Natural killer cell (primary cell): ENCODE measurements at regions of chr7 and their contacts with region 1.

Region 1: DNA sequence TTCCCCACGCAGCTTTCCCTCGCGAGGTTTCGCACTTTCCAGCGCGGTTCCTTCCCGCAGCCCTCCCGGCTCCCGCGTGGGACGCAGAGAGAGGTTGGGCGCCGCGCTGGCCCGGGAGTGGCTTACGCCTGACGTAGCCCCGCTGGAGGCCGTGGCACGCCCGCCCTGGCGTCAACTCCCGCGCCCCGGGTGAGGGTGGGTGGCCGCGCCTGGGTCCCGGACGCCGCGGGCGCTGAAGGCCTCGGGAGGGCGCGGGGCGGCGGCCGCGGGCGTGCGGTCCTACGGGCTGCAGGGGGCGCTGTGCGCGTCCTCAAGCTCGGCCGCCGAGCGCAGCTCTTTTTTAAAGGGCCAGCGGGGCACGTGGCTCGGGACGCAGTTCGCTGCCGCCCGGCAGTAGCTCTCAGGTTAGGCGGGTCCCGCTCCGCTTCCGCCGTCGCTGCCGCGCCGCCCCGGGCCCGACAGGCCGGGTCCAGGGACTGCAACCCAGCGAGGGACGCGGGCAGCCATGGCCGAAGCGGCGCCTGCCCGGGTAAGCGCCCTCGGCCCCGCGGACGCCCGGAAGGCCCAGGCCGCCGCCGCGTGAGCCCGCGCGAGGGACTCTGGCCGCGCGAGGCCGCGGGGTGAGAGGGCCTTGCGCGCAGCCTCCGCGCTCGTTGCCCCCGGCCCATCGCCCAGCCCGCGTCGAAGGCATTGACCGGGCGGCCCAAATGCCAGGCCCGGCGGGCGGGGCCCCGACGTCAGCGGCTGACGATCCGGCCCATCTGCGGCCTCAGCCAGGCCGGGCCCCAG is at the start of gene ZNF783:
- DNase-seq: peak; percentile 82 to 96
- ATAC-seq: peak; percentile 86 to 95 (median 90)
- H3K4me3 ChIP-seq: peak within 1 kb of the TSS; percentile 57
- H3K4me3 Mint-ChIP-seq: peak within 1 kb of the TSS; percentile 91
- H3K27ac ChIP-seq: peak within 1 kb of the TSS; percentile 81
- H3K27ac Mint-ChIP-seq: peak within 1 kb of the TSS; percentile 86 to 88
- H3K4me1 ChIP-seq: peaks cover 16% of the 10 kb centered on the region
- H3K4me1 Mint-ChIP-seq: peaks cover 21 to 33% of the 10 kb centered on the region in 2 donors
- H3K27me3 ChIP-seq: no peaks in the 10 kb centered on the region
- H3K27me3 Mint-ChIP-seq: no peaks in the 10 kb centered on the region
- CTCF ChIP-seq: peak; percentile 80
- total RNA-seq, gene ZNF783: 24.0 to 29.8 (median 28.3) TPM

Region 2: GRCh38 chr7:149284850-149285626 is 23.0 kb after region 1 on chr7:
- intact Hi-C with region 1: loop called (anchors 2 kb)
- DNase-seq: peak; percentile 97 to 99
- ATAC-seq: peak; percentile 98 to 99 (median 99)
- H3K4me3 ChIP-seq: peak overlapping the region; percentile 54
- H3K4me3 Mint-ChIP-seq: peak overlapping the region; percentile 90
- H3K27ac ChIP-seq: no peak overlapping the region
- H3K27ac Mint-ChIP-seq: peak overlapping the region; percentile 31 to 88
- H3K4me1 ChIP-seq: peaks cover 28% of the 10 kb centered on the region
- H3K4me1 Mint-ChIP-seq: peaks cover 34 to 43% of the 10 kb centered on the region in 2 donors
- H3K27me3 ChIP-seq: no peaks in the 10 kb centered on the region
- H3K27me3 Mint-ChIP-seq: no peaks in the 10 kb centered on the region
- CTCF ChIP-seq: no peak

Region 3: GRCh38 chr7:149624419-149625339 is 362.7 kb after region 1 on chr7:
- intact Hi-C with region 1: loop called (anchors 2 kb)
- DNase-seq: peak; percentile 92 to 94
- ATAC-seq: peak; percentile 82 to 95 (median 90)
- H3K4me3 ChIP-seq: peak overlapping the region; percentile 68
- H3K4me3 Mint-ChIP-seq: peak overlapping the region; percentile 86
- H3K27ac ChIP-seq: peak overlapping the region; percentile 75
- H3K27ac Mint-ChIP-seq: peak overlapping the region; percentile 88 to 95
- H3K4me1 ChIP-seq: peaks cover 38% of the 10 kb centered on the region
- H3K4me1 Mint-ChIP-seq: peaks cover 41 to 45% of the 10 kb centered on the region in 2 donors
- H3K27me3 ChIP-seq: no peaks in the 10 kb centered on the region
- H3K27me3 Mint-ChIP-seq: peaks cover 8 to 11% of the 10 kb centered on the region in 2 donors
- CTCF ChIP-seq: peak; percentile 94